Activated CD8-positive, alpha-beta T cell treated with anti-CD3 and anti-CD28 coated beads for 36 hours (primary cell): ENCODE measurements at regions of chr3 and their contacts with region 1.

Region 1: DNA sequence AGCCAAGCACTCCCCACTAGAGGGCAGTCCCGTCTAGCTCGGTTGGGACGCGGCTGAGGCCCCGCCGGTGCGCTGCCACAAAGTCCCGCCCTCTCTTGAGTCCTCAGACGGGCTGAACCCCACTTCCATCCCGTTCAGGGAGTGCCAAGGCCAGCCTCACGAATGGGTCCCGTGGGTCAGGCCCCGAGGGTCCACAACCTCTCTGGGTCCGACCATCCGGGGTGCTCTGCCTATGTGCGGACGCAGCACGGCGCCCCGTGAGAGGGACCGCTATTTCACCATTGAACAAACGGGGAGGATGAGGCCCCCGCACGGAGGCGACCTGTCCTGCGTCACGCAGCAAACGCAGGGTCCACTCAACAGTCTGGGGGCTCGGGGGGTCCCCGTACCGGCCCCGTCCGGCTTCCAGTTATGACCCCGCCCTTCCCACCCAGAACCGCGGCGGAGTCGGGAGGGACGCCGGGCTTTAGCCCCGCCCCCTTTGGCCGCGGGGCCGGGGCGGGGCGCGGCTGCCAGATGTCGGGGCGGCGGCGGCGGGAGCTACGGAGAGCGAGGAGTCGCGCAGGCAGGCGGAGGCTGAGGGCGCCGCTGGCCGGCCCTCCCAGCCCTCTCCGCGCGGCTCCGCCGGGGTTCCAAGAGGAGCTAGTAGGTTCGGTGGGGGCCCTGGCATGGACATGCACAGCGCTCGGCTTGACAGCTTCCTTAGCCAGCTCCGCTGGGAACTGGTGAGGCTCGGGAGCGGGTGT is at the start of gene INKA1:
- DNase-seq: peak; percentile 92
- ATAC-seq: peak; percentile 82
- H3K4me3 Mint-ChIP-seq: peak within 1 kb of the TSS; percentile 78
- H3K27ac Mint-ChIP-seq: peak within 1 kb of the TSS; percentile 78
- H3K4me1 Mint-ChIP-seq: peaks cover 37% of the 10 kb centered on the region
- H3K27me3 Mint-ChIP-seq: peaks cover 2% of the 10 kb centered on the region
- CTCF ChIP-seq: peak; percentile 89
- total RNA-seq, gene INKA1: 1.8 to 2.8 TPM

Region 2: GRCh38 chr3:49377483-49377882 is 425.4 kb before region 1 on chr3:
- CTCF ChIA-PET with region 1: no interaction called
- POLR2A ChIA-PET with region 1: no interaction called
- intact Hi-C with region 1: no loop called
- DNase-seq: peak; percentile 87
- ATAC-seq: peak; percentile 95
- H3K4me3 Mint-ChIP-seq: no peak overlapping the region
- H3K27ac Mint-ChIP-seq: peak overlapping the region; percentile 89
- H3K4me1 Mint-ChIP-seq: peaks cover 33% of the 10 kb centered on the region
- H3K27me3 Mint-ChIP-seq: no peaks in the 10 kb centered on the region
- CTCF ChIP-seq: no peak

Region 3: GRCh38 chr3:49703443-49703927 is 99.4 kb before region 1 on chr3:
- CTCF ChIA-PET with region 1: interaction called, 12 read pairs
- POLR2A ChIA-PET with region 1: no interaction called
- intact Hi-C with region 1: no loop called
- DNase-seq: peak; percentile 74
- ATAC-seq: peak; percentile 99
- H3K4me3 Mint-ChIP-seq: no peak overlapping the region
- H3K27ac Mint-ChIP-seq: peak overlapping the region; percentile 11
- H3K4me1 Mint-ChIP-seq: no peaks in the 10 kb centered on the region
- H3K27me3 Mint-ChIP-seq: no peaks in the 10 kb centered on the region
- CTCF ChIP-seq: peak; percentile 80

Region 4: GRCh38 chr3:49813497-49814174 is 10.7 kb after region 1 on chr3 and contains the start of gene UBA7:
- CTCF ChIA-PET with region 1: interaction called, 34 read pairs
- POLR2A ChIA-PET with region 1: interaction called, 17 read pairs
- intact Hi-C with region 1: no loop called
- DNase-seq: peak; percentile 51
- ATAC-seq: peak; percentile 87
- H3K4me3 Mint-ChIP-seq: peak within 1 kb of the TSS; percentile 92
- H3K27ac Mint-ChIP-seq: peak within 1 kb of the TSS; percentile 96
- H3K4me1 Mint-ChIP-seq: peaks cover 28% of the 10 kb centered on the region
- H3K27me3 Mint-ChIP-seq: no peaks in the 10 kb centered on the region
- CTCF ChIP-seq: no peak
- total RNA-seq, gene UBA7: 69.9 to 72.3 TPM

Region 5: GRCh38 chr3:49839193-49839809 is 36.4 kb after region 1 on chr3:
- CTCF ChIA-PET with region 1: interaction called, 412 read pairs
- POLR2A ChIA-PET with region 1: interaction called, 37 read pairs
- intact Hi-C with region 1: loop called (anchors 2 kb)
- DNase-seq: peak; percentile 90
- ATAC-seq: peak; percentile 93
- H3K4me3 Mint-ChIP-seq: no peak overlapping the region
- H3K27ac Mint-ChIP-seq: no peak overlapping the region
- H3K4me1 Mint-ChIP-seq: peaks cover 1% of the 10 kb centered on the region
- H3K27me3 Mint-ChIP-seq: no peaks in the 10 kb centered on the region
- CTCF ChIP-seq: peak; percentile 78

Region 6: GRCh38 chr3:49899815-49900214 is 96.9 kb after region 1 on chr3:
- CTCF ChIA-PET with region 1: interaction called, 12 read pairs
- POLR2A ChIA-PET with region 1: interaction called, 4 read pairs
- intact Hi-C with region 1: loop called (anchors 5 kb)
- DNase-seq: peak; percentile 44
- ATAC-seq: no peak
- H3K4me3 Mint-ChIP-seq: no peak overlapping the region
- H3K27ac Mint-ChIP-seq: no peak overlapping the region
- H3K4me1 Mint-ChIP-seq: peaks cover 3% of the 10 kb centered on the region
- H3K27me3 Mint-ChIP-seq: no peaks in the 10 kb centered on the region
- CTCF ChIP-seq: no peak